Dendritic cell treated with granulocyte-macrophage colony-stimulating factor and Interleukin-4, amounts not matched to agents 40 ng/mL and 50 ng/mL, for 4 days (primary cell): ENCODE measurements at regions of chr6 and their contacts with region 1.

Region 1: GRCh38 chr6:17884498-17885478 is 102.6 kb downstream of the KIF13A start:
- H3K4me3 Mint-ChIP-seq: peak overlapping the region; percentile 61
- H3K27ac Mint-ChIP-seq: peak overlapping the region; percentile 88
- H3K4me1 Mint-ChIP-seq: peaks cover 64% of the 10 kb centered on the region
- H3K27me3 Mint-ChIP-seq: no peaks in the 10 kb centered on the region

Region 2: DNA sequence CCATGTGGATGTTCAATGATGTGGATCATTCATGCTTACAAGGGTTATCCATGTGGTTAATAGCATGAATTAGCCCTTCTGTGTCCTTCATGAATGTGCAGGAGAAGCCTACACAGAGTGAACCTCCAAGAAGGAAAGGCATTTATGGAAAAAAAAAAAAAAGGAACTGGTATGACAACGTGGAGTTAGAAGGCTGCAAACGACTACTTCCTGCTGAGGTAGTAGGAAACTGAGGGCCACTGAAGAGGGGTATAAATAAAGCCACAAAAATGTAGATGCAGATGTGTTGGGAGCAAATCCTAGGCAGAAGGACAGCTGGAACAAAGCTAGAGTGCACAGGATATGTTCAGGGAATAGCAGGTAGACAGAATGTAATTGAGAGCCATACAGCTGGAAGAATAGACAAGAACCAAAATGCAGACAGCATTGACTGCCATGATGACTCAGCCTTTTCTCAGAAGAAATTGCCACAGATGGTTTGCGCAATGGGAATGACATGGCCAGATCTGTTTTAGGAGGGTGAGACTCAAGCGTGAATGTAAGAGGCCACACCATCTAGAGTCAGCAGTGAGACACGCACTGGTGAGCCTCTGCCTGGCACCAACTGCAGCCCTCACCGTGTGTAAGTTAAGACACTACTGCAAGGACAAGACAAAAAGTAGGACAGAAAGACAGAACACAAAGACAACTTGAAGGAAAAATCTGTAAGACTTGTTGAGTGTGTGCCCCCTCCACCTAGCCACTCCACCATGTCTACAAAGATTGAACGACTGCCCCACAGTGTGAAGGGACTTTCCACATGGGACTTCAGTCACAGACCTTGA is 22.8 kb after region 1 on chr6:
- intact Hi-C with region 1: loop called (anchors 2 kb)
- H3K4me3 Mint-ChIP-seq: peak overlapping the region; percentile 66
- H3K27ac Mint-ChIP-seq: peak overlapping the region; percentile 93
- H3K4me1 Mint-ChIP-seq: peaks cover 60% of the 10 kb centered on the region
- H3K27me3 Mint-ChIP-seq: no peaks in the 10 kb centered on the region

Region 3: DNA sequence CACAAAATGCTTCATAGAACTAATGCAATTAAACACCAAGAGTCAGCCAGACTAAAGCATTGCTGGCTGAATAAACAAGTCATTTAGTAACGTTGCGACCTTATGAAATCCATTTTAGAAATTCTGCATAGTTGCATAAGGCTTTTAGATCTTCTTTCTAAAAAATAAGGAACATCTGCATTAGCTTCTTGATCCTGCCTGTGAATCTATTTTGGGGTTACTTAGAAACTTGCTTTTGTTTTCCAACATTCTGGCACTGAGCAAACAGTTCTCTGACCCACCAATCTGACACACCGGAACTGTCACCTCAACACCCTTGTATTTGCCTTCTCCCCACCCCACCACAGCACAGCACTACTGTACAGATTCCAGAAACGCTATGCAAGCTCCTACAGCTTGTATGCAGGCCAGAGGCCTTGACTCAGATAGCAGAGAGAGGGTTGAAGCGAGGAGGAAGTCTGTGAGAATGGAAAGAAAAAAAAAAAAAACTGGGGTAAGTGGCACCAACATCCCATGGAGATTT is 47.6 kb after region 1 on chr6:
- intact Hi-C with region 1: loop called (anchors 10 kb)
- H3K4me3 Mint-ChIP-seq: peak overlapping the region; percentile 55
- H3K27ac Mint-ChIP-seq: peak overlapping the region; percentile 87
- H3K4me1 Mint-ChIP-seq: peaks cover 53% of the 10 kb centered on the region
- H3K27me3 Mint-ChIP-seq: no peaks in the 10 kb centered on the region